ENCODE measurements at regions of chr9 and their contacts with region 1.

Region 1: GRCh38 chr9:70340572-70340971 is 73.9 kb downstream of the KLF9 start:
- DNase-seq: no peak
- H3K4me3 ChIP-seq: no peak overlapping the region
- H3K27ac ChIP-seq: no peak overlapping the region
- H3K4me1 ChIP-seq: no peaks in the 10 kb centered on the region
- H3K27me3 ChIP-seq: no peaks in the 10 kb centered on the region
- CTCF ChIP-seq: peak; percentile 31 to 43

Region 2: DNA sequence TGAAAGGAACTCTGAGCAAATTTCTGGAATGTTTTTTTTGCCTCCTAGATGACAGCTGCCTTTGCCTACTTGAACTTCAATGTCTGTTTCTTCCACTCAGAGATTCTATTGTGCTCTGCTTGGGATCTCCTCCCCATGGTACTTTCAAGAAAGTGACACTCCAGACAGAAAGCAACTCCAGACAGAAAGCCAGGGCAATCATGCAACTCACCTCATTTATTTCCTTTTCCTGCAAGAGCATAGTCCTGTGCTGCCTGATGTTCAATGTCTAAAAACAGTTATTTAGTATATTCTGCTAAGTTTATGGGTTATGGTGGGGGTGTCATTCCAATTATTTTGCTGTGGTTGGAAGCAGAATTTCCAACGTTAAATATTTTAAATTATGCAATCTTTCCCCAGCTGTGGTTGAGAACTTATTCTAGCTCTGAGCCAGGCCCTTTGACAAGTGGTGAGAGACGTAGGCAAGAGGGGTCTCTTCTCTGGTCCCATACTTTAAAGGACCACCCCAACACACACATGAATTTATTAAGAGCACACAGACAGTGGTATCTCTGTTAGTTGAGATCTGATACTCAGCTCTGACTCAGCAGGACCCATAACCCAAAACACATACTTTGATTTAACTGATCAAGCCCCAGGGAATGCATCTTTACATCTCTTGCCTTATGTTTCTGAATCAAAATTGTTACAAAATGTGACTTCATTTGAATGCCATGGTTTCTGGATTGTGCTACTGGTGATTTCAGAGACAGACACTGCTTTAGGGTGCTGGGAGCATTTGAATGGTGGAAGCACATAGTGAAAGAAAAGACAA is 336.5 kb before region 1 on chr9:
- CTCF ChIA-PET with region 1: no interaction called
- dilution Hi-C with region 1: no loop called
- in situ Hi-C with region 1: no loop called
- intact Hi-C with region 1: no loop called
- DNase-seq: peak; percentile 39
- H3K4me3 ChIP-seq: no peak overlapping the region
- H3K27ac ChIP-seq: no peak overlapping the region
- H3K4me1 ChIP-seq: peaks cover 5% of the 10 kb centered on the region
- H3K27me3 ChIP-seq: no peaks in the 10 kb centered on the region
- CTCF ChIP-seq: no peak

Region 3: DNA sequence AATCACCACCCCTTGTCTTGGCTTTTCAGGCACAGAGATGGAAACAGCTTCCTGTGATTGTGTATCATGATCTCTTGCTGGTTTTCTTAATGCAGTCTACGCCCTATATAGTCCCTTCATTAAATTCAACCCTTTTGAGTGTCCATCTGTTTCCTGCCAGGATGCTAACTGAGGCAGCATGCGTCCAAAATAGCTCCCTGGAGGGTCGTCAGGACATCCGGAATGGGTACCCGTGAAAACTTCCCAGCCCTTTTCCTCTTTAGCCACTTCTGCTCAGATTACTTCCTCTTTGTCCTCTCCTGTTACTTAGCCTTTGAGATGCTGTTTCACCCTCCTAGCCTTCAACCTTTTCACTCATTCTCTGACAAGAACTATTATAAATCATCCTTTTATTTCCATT is 153.6 kb after region 1 on chr9:
- CTCF ChIA-PET with region 1: no interaction called
- dilution Hi-C with region 1: no loop called
- in situ Hi-C with region 1: no loop called
- intact Hi-C with region 1: loop called (anchors 5 kb)
- DNase-seq: no peak
- H3K4me3 ChIP-seq: no peak overlapping the region
- H3K27ac ChIP-seq: no peak overlapping the region
- H3K4me1 ChIP-seq: no peaks in the 10 kb centered on the region
- H3K27me3 ChIP-seq: no peaks in the 10 kb centered on the region
- CTCF ChIP-seq: no peak

Region 4: DNA sequence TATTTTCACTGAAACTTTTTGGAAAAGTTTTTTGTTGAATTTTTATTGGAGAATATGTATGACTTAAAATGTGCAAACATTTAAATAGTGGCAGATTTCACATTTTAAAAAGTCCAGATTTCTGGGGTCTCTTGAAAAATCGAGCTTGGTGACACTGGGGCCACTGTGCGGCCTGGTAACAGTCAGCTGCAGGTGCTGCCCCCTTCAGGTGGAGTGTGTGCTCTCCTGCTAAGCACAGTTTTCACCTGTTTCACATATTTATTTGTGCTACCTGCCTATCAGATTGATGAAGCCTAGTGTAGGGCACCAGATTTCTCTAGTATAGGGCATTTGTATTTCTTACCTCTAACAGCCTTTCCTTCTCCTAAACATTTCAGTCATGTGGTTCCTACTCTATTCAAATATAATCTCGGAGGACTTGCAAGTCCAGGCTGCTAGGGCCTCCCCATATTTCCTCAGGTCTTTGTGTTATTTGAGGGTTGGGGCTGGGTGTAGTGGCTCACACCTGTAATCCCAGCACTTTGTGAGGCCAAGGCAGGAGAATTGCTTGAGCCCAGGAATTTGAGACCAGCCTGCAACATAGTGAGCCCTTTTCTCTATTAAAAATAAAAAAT is 169.7 kb after region 1 on chr9:
- CTCF ChIA-PET with region 1: no interaction called
- dilution Hi-C with region 1: no loop called
- in situ Hi-C with region 1: no loop called
- intact Hi-C with region 1: loop called (anchors 5 kb)
- DNase-seq: no peak
- H3K4me3 ChIP-seq: no peak overlapping the region
- H3K27ac ChIP-seq: no peak overlapping the region
- H3K4me1 ChIP-seq: no peaks in the 10 kb centered on the region
- H3K27me3 ChIP-seq: no peaks in the 10 kb centered on the region
- CTCF ChIP-seq: peak; percentile 67 to 73

Region 5: GRCh38 chr9:70587201-70587600 is 246.6 kb after region 1 on chr9:
- CTCF ChIA-PET with region 1: no interaction called
- dilution Hi-C with region 1: no loop called
- in situ Hi-C with region 1: loop called in 1 of 2 experiments (anchors 10 kb)
- intact Hi-C with region 1: no loop called
- DNase-seq: no peak
- H3K4me3 ChIP-seq: no peak overlapping the region
- H3K27ac ChIP-seq: no peak overlapping the region
- H3K4me1 ChIP-seq: peaks cover 16% of the 10 kb centered on the region
- H3K27me3 ChIP-seq: no peaks in the 10 kb centered on the region
- CTCF ChIP-seq: no peak

Region 6: GRCh38 chr9:70609542-70610286 is 269.1 kb after region 1 on chr9:
- CTCF ChIA-PET with region 1: no interaction called
- dilution Hi-C with region 1: loop called (anchors 10 kb)
- in situ Hi-C with region 1: no loop called
- intact Hi-C with region 1: no loop called
- DNase-seq: peak; percentile 72
- H3K4me3 ChIP-seq: no peak overlapping the region
- H3K27ac ChIP-seq: no peak overlapping the region
- H3K4me1 ChIP-seq: no peaks in the 10 kb centered on the region
- H3K27me3 ChIP-seq: no peaks in the 10 kb centered on the region
- CTCF ChIP-seq: no peak

Measured in mammary epithelial cell (primary cell).